ENCODE measurements at regions of chrX and their contacts with region 1.

Region 1: GRCh38 chrX:149962859-149963757 is 24.8 kb upstream of the EOLA2 start:
- DNase-seq: peak; percentile 23 to 80 (median 60)

Region 2: GRCh38 chrX:150084496-150085229 is 121.6 kb after region 1 on chrX:
- intact Hi-C with region 1: no loop called
- DNase-seq: no peak

Region 3: GRCh38 chrX:150352581-150352980 is 389.5 kb after region 1 on chrX:
- intact Hi-C with region 1: loop called (anchors 10 kb)
- DNase-seq: peak in 2 of 42 donors; percentile 9

Region 4: DNA sequence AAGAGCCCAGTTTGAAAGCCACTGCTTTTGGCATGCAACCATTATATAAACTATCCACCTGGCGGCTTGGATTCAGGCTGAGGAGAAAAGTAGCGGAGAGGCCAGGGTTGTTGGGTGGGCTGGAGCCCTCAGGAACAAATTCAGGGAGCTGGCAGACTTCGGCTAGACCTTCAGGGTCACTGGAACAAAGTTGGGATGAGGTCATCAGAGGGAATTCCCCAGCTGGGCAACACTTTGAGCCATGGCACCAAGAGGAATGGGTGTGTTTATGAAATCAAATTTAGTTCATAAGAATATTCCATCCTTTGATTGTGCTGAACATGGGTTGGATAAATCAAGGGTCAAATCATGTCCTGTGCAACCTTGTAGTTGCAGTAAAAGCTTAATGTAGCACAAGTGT is 752.1 kb after region 1 on chrX:
- intact Hi-C with region 1: loop called (anchors 10 kb)
- DNase-seq: no peak

Measured in head of caudate nucleus (tissue), 42 donors.